ENCODE measurements at regions of chr3 and their contacts with region 1.

Region 1: DNA sequence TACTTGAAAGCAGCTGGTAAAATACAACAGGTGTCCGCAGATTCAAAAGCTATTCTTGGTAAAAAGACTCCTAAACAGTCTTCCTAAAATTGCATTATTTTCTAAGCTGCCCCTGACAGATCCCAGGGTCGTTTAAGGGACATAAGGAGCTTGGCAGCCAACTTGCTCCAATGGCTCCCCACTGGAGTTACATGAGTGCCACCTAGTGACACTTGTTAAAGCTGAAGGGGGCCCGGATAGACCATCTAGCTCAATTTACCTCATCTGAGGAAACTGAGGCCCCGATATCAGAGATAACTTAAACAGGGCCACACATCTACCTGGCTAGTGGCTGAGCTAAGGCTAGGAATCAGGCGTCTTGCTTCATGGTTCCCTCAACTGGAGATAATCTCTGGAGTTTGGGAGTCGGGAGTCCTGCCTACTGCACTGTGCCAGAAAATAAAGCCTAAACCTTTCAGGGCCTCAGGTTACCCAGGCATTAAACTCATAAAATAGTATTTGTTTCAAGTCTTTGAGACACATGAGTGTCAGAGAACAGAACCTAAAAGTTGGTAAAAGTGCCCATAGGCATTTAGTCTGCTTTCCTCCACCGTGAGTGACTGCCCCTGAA is 6.5 kb upstream of the TBC1D23 start:
- DNase-seq: no peak
- H3K4me3 ChIP-seq: no peak overlapping the region
- H3K27ac ChIP-seq: no peak overlapping the region
- H3K4me1 ChIP-seq: peaks cover 21% of the 10 kb centered on the region
- H3K27me3 ChIP-seq: no peaks in the 10 kb centered on the region
- CTCF ChIP-seq: peak; percentile 29 to 79 (median 52)
- POLR2A ChIP-seq: no peak

Region 2: DNA sequence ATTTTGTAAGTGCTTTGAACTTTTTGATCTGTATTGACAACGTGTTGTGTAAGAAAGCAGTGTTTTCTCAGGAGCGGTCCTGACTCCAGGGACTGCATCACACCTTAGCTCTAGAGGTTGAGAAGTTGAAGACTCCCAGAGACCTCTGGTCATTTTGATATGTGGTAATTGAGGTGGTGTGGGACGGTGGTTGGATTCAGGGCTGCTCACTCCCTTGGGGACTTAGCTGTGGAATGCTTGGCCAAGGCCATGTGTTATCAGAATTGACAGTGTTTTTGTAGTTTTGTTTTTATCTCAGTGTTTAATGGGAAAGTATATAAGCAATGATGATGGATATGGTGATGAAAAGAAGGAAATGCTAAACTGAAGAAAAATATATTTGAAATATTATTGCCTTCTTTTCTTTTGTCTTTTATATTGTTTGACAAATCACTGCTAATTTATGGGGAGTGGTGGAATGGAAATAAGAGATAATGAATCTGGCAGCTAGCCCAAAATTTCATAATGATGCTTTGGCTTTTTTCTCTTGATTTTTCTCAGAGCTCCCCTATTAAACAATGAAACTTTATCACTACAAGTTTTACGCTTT is 420.6 kb before region 1 on chr3:
- intact Hi-C with region 1: loop called (anchors 5 kb)
- DNase-seq: no peak
- H3K4me3 ChIP-seq: no peak overlapping the region
- H3K27ac ChIP-seq: no peak overlapping the region
- H3K4me1 ChIP-seq: no peaks in the 10 kb centered on the region
- H3K27me3 ChIP-seq: no peaks in the 10 kb centered on the region
- CTCF ChIP-seq: no peak
- POLR2A ChIP-seq: no peak

Region 3: DNA sequence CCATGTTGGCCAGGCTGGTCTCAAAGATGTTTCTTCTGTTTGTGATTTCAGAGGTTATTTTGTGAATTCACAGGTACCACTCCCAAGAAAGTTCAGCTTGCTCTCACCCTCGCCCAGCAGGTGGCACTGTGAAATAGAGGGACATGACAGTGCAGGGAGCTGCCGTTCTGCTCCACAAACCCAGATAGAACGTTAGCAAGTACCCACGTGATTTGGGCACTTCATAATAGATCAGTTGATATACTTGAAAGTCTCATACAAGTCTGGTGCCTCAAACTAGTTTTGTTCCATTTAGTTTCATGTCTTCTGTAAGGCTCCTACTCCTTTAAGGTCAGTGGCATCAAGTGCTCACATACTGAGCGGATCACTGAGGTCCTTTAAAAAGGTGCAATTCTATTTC is 185.4 kb before region 1 on chr3:
- intact Hi-C with region 1: loop called (anchors 10 kb)
- DNase-seq: no peak
- H3K4me3 ChIP-seq: no peak overlapping the region
- H3K27ac ChIP-seq: no peak overlapping the region
- H3K4me1 ChIP-seq: peaks cover 30% of the 10 kb centered on the region
- H3K27me3 ChIP-seq: no peaks in the 10 kb centered on the region
- CTCF ChIP-seq: peak; percentile 26 to 68 (median 66)
- POLR2A ChIP-seq: no peak

Measured in vagina (tissue), 2 donors.